Activated T-helper 2 cell treated with anti-CD3 and anti-CD28 coated beads, Interferon-gamma antibody, Interleukin-2, Interleukin-4, amounts not matched to agents 10 μg/mL and 5 μg/mL and 100 μg/mL, durations not matched to agents 14 hours and 24 hours and 36 hours (primary cell): ENCODE measurements at regions of chr2 and their contacts with region 1.

Region 1: DNA sequence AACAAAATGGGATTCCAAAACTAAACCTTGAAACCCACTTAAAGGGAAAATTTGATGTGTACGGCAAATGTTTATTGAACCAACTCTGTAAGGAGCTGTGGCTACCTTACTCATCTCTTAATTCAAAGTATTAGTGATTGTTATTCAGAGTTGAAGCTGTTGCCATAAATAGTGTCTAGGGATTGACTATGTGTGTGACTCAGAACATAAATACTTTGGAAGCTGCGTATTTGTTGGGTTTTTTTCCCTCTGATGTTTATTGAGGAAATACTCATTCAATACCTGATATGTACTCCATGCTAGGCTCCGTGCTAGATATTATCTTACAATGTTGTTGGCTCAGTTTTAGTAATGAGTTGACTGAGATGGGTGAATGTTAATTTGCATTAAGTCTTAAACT is 90.4 kb downstream of the PTRHD1 start:
- DNase-seq: no peak
- H3K4me3 Mint-ChIP-seq: no peak overlapping the region
- H3K27ac Mint-ChIP-seq: peak overlapping the region; percentile 33
- H3K4me1 Mint-ChIP-seq: peaks cover 5% of the 10 kb centered on the region
- H3K27me3 Mint-ChIP-seq: no peaks in the 10 kb centered on the region

Region 2: DNA sequence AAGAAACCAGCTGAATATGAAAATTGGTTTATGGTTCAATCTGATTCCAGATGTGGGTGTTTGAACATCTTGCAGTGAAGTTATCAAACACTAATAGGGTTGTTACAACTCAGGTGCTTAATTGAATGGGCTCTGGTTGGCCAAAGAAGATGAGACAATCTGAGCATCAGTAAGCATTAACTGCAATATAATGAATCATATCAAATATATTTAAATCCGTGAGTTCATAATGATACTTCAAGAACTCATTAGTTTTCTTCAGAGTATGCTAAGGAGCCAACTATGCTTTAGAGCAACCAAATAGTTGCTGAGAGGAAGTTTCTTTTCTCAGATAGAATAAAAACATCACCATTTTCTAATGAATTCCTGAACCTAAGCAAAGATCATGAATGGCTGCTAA is 132.6 kb before region 1 on chr2:
- intact Hi-C with region 1: loop called (anchors 1 kb)
- DNase-seq: no peak
- H3K4me3 Mint-ChIP-seq: no peak overlapping the region
- H3K27ac Mint-ChIP-seq: no peak overlapping the region
- H3K4me1 Mint-ChIP-seq: peaks cover 26% of the 10 kb centered on the region
- H3K27me3 Mint-ChIP-seq: no peaks in the 10 kb centered on the region